ENCODE measurements at regions of chr12 and their contacts with region 1.

Region 1: DNA sequence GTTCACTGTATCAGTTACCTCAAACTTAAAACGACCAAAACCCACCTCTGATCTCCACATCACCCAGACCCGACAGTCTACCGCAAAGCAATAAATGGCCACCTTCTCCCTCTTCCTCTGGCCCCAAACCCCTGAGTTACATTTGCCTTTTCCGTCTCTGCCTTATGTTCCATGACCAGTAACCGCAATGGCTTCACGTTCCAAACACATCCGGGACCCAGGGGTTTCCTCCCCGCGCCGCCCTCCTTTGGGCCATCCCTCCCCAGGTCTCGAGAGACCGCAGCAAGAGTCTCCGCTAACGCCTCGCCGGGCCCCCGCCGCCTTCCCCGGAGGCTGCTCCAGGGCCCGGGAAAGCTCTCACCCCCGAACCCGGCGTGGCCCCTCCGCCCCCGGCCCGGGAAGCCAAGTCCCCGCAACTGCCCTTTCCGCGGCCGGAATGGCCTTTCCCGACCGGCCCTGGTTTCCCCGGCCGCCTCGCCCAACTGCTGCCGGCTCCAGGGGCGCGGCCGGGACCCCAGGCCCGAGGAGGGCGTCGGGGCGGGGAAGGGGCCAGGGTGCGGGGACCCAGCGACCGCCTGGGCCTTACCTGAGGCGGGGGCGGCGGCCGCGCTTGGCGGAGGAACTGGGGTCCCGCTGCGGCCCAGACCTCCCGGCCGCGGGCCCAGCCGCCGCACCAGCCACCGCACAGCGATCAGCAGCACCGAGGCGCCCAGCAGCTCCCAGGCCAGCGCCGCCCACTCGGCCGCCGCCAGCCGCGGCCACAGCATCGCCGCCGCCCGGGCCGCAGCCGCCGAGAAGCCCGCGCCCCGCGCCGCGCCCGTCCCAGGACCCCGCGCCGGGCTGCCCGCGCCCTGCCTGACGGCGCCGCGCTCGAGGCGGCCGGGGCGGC is at the start of gene ANKLE2:
- DNase-seq: peak in 1 of 10 donors; percentile 52
- H3K4me3 ChIP-seq: peak within 1 kb of the TSS; percentile 69 to 99 (median 88)
- H3K27ac ChIP-seq: peak within 1 kb of the TSS; percentile 66 to 99 (median 94)
- H3K27me3 ChIP-seq: no peaks in the 10 kb centered on the region
- CTCF ChIP-seq: no peak
- total RNA-seq, gene ANKLE2: 35.7 to 67.9 (median 47.9) TPM

Region 2: DNA sequence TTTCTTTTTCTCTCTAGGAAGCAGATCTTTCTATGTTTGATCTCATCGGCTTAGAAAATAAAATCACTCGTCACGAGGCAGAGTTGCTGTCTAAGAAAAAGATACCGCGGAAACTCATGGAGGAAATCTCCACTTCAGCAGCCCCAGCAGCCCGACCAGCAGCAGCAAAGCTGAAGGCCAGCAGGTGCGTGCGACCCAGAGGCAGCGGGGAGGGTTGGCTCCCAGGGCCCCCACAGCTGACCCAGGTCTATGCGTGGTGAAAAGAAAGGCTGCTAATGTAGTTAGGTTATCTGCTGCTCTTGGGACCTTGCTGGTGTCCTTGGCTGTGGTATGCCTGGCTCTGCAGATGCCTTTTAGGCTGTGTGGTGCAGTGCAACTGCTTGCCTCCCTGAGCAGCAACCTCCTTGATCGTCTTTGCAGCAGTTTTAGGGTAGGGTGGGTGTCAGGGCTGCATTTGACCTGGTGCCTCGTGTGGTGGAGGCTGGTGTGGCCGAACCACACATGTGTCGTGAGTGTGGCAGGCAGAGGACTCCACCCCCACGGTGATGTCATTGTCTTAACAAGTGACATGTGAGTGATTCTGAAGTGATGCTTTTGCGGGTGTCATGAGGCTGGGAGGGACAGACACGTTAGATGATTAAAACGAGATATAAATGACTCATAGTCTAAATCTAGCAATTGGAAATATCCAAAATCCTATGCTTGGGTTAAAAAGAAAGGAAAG is 742.9 kb before region 1 on chr12:
- intact Hi-C with region 1: no loop called
- DNase-seq: peak in 2 of 10 donors; percentile 22 to 33
- H3K4me3 ChIP-seq: no peak overlapping the region
- H3K27ac ChIP-seq: peak overlapping the region in 6 of 59 donors; percentile 22 to 52 (median 28)
- H3K27me3 ChIP-seq: no peaks in the 10 kb centered on the region
- CTCF ChIP-seq: no peak

Region 3: DNA sequence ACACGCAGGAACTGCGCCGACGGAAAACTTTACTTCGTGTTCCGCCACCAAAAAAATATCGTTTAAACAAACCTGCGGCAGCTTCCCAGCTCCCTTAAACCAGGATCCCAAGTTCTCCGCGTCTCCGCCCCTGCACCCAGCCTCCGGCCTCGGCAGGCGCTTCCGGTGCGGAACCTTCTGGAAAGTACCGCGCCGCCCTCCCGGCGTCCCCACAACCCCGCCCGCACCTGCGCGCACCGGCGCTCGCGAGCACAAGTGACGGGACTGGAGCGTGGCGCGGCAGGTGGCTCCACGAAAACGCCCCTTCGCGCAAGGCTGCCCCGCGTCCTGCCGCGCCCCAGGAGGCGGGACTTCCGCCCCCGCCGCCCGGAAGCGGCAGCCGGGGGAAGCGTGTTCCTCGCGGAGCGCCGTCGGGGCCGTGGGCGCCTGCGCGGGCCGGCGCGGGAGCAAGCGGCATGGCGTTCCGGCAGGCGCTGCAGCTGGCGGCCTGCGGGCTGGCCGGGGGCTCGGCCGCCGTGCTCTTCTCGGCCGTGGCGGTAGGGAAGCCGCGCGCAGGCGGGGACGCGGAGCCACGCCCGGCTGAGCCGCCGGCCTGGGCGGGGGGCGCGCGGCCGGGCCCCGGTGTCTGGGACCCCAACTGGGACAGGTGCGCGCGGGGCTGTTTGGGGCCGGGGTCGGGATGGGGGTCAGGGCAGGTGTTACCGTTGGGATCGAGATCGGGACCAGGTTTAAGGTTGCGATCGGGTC is 50.7 kb before region 1 on chr12 and contains the start of gene PGAM5:
- intact Hi-C with region 1: loop called in 1 of 2 experiments (anchors 5 kb)
- DNase-seq: peak; percentile 39 to 90 (median 74)
- H3K4me3 ChIP-seq: peak within 1 kb of the TSS; percentile 58 to 99 (median 91)
- H3K27ac ChIP-seq: peak within 1 kb of the TSS; percentile 14 to 97 (median 88)
- H3K27me3 ChIP-seq: no peaks in the 10 kb centered on the region
- CTCF ChIP-seq: peak in 21 of 56 donors; percentile 7 to 47 (median 26)
- total RNA-seq, gene PGAM5: 15.3 to 56.7 (median 36.9) TPM

Region 4: GRCh38 chr12:132836795-132837331 is 75.6 kb after region 1 on chr12:
- intact Hi-C with region 1: no loop called
- DNase-seq: no peak
- H3K4me3 ChIP-seq: no peak overlapping the region
- H3K27ac ChIP-seq: peak overlapping the region in 1 of 59 donors; percentile 80
- H3K27me3 ChIP-seq: no peaks in the 10 kb centered on the region
- CTCF ChIP-seq: no peak

Measured in dorsolateral prefrontal cortex (tissue), 120 donors.